ENCODE measurements at regions of chr6 and their contacts with region 1.

Region 1: GRCh38 chr6:52284460-52285176 is at the start of gene MCM3:
- DNase-seq: peak; percentile 96 to 100 (median 98)

Region 2: GRCh38 chr6:52233975-52234823 is 50.4 kb before region 1 on chr6:
- intact Hi-C with region 1: no loop called
- DNase-seq: peak in 3 of 10 donors; percentile 2 to 61 (median 8)

Region 3: DNA sequence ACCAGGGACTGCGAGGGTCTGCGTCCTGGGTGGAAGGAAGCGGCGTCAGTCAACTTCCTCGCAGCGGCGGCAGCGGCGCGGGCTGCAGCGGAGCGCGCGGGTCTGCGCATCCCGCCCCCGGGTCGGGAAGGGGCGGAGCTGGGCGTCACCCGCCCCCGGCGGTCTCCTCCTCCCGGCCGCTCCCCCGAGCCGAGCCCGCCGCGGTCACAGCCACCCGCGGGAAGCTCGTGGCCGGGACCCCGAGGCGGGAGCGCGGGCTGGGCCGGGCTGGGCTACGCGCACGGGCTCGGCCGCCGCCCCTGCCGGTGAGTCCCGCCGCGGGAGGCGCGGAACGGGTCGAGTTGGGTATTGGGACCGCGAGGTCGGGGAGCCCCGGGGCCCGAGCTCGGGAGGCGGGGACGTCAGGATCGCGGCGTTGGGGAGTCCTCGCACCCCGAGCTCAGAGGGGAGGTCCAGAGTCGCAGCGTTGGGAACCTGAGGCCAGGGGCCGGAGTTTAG is 77.4 kb after region 1 on chr6 and contains the start of gene PAQR8:
- intact Hi-C with region 1: loop called (anchors 1 kb)
- DNase-seq: peak; percentile 68 to 98 (median 76)

Region 4: GRCh38 chr6:52399511-52400312 is 115.1 kb after region 1 on chr6:
- intact Hi-C with region 1: loop called (anchors 2 kb)
- DNase-seq: peak in 1 of 10 donors; percentile 31

Region 5: GRCh38 chr6:52419809-52420670 is 135.4 kb after region 1 on chr6 and contains the start of gene EFHC1:
- intact Hi-C with region 1: loop called (anchors 1 kb)
- DNase-seq: peak; percentile 97 to 100 (median 98)

Region 6: GRCh38 chr6:52577022-52577777 is 292.6 kb after region 1 on chr6 and contains the start of gene TRAM2:
- intact Hi-C with region 1: loop called (anchors 10 kb)
- DNase-seq: peak; percentile 57 to 96 (median 72)

Region 7: GRCh38 chr6:52664186-52664990 is 379.8 kb after region 1 on chr6:
- intact Hi-C with region 1: loop called (anchors 5 kb)
- DNase-seq: peak; percentile 73 to 98 (median 86)

Measured in posterior cingulate gyrus (tissue), 11 donors.